Right ventricle myocardium inferior (tissue), 1 donor: ENCODE measurements at regions of chr19 and their contacts with region 1.

Region 1: DNA sequence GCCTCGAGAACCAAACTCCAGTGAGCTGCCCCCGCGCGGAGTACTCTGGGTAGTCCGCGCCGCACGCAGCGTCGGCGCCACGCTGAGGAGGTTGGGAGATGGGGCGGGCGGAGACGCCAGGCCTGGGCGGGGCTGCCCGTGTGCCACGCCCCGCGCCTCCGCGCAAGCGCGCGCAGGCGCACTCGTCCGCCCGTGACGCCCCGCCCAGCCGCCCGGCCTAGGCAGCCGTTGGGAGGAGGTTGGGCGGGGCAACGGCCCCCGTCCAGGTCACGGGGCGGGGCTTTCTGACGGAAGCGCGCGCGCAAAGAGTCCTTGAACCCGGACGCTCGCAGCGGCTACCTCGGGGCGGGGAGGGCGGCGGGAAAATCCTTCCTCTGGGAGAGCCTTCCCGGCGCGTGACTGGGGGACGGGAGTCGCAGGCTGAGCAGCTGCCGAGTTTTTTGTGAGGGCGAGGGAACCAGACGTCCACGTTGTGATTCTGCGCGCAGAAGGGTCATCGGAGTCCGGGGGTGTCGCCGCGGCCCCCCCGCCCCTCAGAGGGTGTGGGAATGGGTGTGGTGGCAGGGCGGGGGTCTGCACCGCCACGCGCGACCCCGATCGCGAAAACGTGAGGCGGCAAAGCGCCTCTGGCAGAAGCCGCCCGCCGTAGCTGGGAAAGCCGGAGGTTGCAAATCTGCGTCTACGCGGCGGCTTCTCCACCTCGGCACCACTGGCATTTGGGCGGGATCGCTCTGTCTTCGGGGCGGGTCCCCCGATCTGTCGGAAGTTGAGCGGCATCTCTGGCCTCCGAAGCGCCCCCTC is at the start of gene MED26:
- DNase-seq: peak; percentile 98
- ATAC-seq: peak; percentile 94
- total RNA-seq, gene MED26: 6.1 TPM

Region 2: DNA sequence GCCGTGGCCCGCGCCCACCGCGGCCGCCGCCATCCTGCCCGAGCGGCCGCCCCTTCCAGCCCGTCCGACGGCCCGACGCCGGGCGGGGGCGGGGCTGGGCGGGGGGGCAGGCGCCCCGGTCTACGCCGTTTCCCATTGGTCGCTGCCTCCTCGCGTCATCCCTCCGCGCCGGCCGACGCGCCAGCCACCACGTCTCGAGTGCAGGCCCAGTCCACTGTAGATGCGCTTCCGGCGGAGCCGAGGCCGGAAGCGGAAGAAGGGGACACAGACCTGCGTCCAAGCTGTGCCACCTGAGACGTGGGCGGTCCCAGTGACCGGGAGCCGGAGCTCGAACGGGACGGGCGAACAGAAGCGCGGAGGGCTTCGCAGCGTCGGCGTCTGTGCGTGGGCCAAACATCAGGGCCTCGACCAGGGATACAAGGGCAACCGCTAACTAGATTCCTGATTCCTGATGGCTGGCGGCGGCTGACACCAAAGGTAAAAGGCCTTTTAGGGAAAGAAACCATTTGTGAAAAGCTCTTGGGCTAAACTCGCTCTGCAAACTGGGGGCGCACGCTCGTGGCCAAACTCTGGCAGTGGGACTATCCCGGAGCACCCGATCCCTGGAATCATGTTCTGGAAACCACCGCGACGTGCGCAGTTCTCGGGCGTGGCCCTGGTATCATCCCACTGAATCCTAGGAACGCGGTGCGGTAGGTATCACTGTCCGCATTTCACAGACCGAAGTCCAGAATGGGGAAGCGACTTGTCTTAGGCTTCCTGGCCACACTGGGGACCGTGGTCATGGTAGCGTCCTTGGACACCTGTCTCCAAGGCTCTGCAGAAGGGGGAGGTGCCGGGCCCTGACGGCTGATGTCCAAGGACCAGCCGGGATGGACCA is 55.8 kb before region 1 on chr19 and contains the start of gene SLC35E1:
- intact Hi-C with region 1: loop called (anchors 2 kb)
- DNase-seq: peak; percentile 97
- ATAC-seq: peak; percentile 97
- total RNA-seq, gene SLC35E1: 23.5 TPM

Region 3: GRCh38 chr19:16584248-16585141 is 43.9 kb before region 1 on chr19:
- intact Hi-C with region 1: loop called (anchors 2 kb)
- DNase-seq: peak; percentile 90
- ATAC-seq: peak; percentile 75

Region 4: GRCh38 chr19:16737911-16738310 is 109.5 kb after region 1 on chr19:
- intact Hi-C with region 1: no loop called
- DNase-seq: no peak
- ATAC-seq: no peak